ENCODE measurements at regions of chr14 and their contacts with region 1.

Region 1: GRCh38 chr14:81269100-81269978 is 48.6 kb upstream of the GTF2A1 start:
- DNase-seq: peak; percentile 26
- ATAC-seq: peak; percentile 89
- H3K4me3 ChIP-seq: no peak overlapping the region
- H3K27ac ChIP-seq: no peak overlapping the region
- H3K4me1 ChIP-seq: no peaks in the 10 kb centered on the region
- H3K27me3 ChIP-seq: no peaks in the 10 kb centered on the region; a peak in 1 of 4 replicates
- CTCF ChIP-seq: peak; percentile 58 to 76 (median 63)
- EP300 ChIP-seq: no peak
- POLR2A ChIP-seq: no peak
- RAD21 ChIP-seq: peak; percentile 77

Region 2: DNA sequence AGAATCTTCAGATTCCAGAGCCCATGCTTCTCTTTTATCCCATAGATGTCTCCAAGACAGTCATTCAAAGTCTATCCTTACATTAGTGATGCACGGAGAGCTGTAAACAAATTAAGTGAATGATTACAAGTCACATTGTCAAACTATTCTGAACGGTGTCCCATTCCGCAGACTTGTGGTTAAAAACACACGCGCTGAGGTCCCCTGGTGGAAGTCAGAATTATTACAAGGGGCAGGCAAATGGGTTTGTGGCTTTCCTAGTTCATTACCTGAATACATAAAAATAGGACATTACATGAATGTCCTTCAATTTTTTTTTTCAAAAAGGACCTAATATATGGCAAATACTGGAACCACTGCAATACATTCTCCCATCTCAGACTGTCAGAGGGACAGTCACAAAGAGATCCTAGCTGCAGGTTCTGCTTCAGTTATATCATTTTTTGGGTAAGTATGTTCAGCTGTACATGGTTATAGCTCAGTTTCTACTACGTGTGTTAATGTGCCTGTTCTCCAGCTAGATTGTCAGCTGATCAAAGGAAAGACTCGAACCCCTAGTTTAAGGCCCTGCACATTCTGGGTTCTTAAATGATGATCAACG is 183.9 kb after region 1 on chr14:
- CTCF ChIA-PET with region 1: interaction called, 195 read pairs
- POLR2A ChIA-PET with region 1: interaction called, 3 read pairs
- RAD21 ChIA-PET with region 1: interaction called, 79 read pairs
- SMC1A ChIA-PET with region 1: interaction called, 110 read pairs
- in situ Hi-C with region 1: loop called (anchors 5 kb)
- intact Hi-C with region 1: loop called (anchors 1 kb)
- DNase-seq: no peak
- ATAC-seq: peak; percentile 80
- H3K4me3 ChIP-seq: no peak overlapping the region
- H3K27ac ChIP-seq: no peak overlapping the region
- H3K4me1 ChIP-seq: peaks cover 3% of the 10 kb centered on the region; the same call in 1 of the 2 replicates
- H3K27me3 ChIP-seq: no peaks in the 10 kb centered on the region; a peak in 3 of 4 replicates
- CTCF ChIP-seq: peak; percentile 75 to 85 (median 84)
- EP300 ChIP-seq: no peak
- POLR2A ChIP-seq: no peak
- RAD21 ChIP-seq: peak; percentile 84

Region 3: GRCh38 chr14:82009076-82009475 is 739.7 kb after region 1 on chr14:
- CTCF ChIA-PET with region 1: no interaction called
- POLR2A ChIA-PET with region 1: no interaction called
- RAD21 ChIA-PET with region 1: no interaction called
- SMC1A ChIA-PET with region 1: no interaction called
- in situ Hi-C with region 1: no loop called
- intact Hi-C with region 1: no loop called
- DNase-seq: no peak
- ATAC-seq: peak; percentile 59
- H3K4me3 ChIP-seq: no peak overlapping the region
- H3K27ac ChIP-seq: no peak overlapping the region
- H3K4me1 ChIP-seq: no peaks in the 10 kb centered on the region
- H3K27me3 ChIP-seq: no peaks in the 10 kb centered on the region
- CTCF ChIP-seq: peak; percentile 17 to 25 (median 19); a peak in 2 of 6 replicates
- EP300 ChIP-seq: no peak
- POLR2A ChIP-seq: no peak
- RAD21 ChIP-seq: peak; percentile 37; the same call in 1 of the 2 replicates

Measured in GM12878 (cell line).